ENCODE measurements at regions of chr1 and their contacts with region 1.

Region 1: GRCh38 chr1:235843461-235843961 is 23.2 kb downstream of the LYST start:
- DNase-seq: peak; percentile 76
- H3K4me3 Mint-ChIP-seq: no peak overlapping the region
- H3K27ac Mint-ChIP-seq: no peak overlapping the region
- H3K4me1 Mint-ChIP-seq: no peaks in the 10 kb centered on the region
- H3K27me3 Mint-ChIP-seq: no peaks in the 10 kb centered on the region
- CTCF ChIP-seq: peak; percentile 76

Region 2: GRCh38 chr1:235513495-235514366 is 329.8 kb before region 1 on chr1:
- CTCF ChIA-PET with region 1: interaction called, 20 read pairs
- POLR2A ChIA-PET with region 1: interaction called, 3 read pairs
- intact Hi-C with region 1: loop called (anchors 1 kb)
- DNase-seq: peak; percentile 94
- H3K4me3 Mint-ChIP-seq: no peak overlapping the region
- H3K27ac Mint-ChIP-seq: no peak overlapping the region
- H3K4me1 Mint-ChIP-seq: peaks cover 6% of the 10 kb centered on the region
- H3K27me3 Mint-ChIP-seq: no peaks in the 10 kb centered on the region
- CTCF ChIP-seq: peak; percentile 98

Region 3: DNA sequence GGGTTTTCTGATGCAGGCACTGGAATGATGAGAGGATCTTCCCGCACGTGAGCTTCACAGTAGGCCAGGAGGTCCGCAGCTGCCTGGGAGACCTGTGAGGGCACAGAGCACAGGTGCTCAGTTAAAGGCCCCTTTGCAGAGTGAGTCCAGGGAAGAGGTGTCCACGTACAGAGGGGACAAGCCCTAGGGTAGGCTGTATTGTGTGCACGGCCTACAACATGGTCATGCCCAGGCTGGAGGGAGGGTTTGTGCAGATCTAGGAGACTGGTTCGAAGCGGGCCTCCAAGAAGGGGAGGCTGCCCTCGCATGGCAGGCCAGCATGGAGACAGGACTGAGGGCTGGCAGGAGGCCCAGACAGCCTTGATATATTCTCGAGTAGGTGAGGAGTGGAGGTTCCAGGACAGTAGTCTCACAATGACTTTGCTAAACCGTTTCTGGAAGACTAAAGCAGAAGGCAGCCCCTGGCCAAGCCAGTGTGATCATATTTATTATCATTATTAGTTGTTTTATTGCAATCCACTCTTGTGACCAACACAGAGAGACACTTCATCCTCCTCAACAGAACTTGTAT is 291.3 kb before region 1 on chr1:
- CTCF ChIA-PET with region 1: no interaction called
- POLR2A ChIA-PET with region 1: no interaction called
- intact Hi-C with region 1: no loop called
- DNase-seq: no peak
- H3K4me3 Mint-ChIP-seq: no peak overlapping the region
- H3K27ac Mint-ChIP-seq: no peak overlapping the region
- H3K4me1 Mint-ChIP-seq: no peaks in the 10 kb centered on the region
- H3K27me3 Mint-ChIP-seq: no peaks in the 10 kb centered on the region
- CTCF ChIP-seq: no peak

Region 4: GRCh38 chr1:235739124-235739523 is 104.4 kb before region 1 on chr1:
- CTCF ChIA-PET with region 1: no interaction called
- POLR2A ChIA-PET with region 1: no interaction called
- intact Hi-C with region 1: no loop called
- DNase-seq: peak; percentile 73
- H3K4me3 Mint-ChIP-seq: no peak overlapping the region
- H3K27ac Mint-ChIP-seq: no peak overlapping the region
- H3K4me1 Mint-ChIP-seq: peaks cover 25% of the 10 kb centered on the region
- H3K27me3 Mint-ChIP-seq: no peaks in the 10 kb centered on the region
- CTCF ChIP-seq: no peak

Region 5: DNA sequence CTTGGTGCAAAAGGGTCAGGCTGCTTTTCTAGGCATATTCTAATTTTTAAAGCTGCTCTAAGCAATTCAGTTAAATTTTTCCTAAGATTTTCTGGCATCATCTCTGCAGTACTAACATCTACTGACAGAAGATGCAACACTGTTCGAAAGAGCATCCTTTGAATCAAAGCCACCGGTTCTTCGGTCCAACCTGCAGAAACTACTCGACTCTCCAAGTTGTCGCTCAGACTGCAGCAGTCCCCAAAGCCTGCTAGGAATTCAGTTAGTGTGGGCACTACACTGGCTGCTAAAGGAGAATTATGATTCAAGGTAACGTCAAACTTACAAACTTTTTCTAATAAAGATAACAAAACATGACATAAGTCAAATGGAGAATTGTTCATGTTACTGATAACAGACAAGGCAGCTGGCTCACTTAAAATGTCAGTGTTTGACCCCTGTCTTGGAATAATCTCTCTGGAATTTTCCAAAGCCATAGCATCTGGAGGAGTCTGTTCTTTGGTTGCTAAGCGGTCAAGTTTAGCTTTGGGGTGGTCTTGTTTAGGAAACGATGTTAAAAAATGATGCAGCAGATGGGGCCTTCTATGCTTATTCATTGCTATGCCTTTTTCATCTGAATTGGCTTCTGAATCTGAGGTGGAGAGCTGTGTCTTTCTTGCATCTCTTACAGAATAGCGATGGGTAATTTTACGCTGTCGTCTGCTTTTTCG is 33.7 kb before region 1 on chr1:
- CTCF ChIA-PET with region 1: interaction called, 13 read pairs
- POLR2A ChIA-PET with region 1: interaction called, 3 read pairs
- intact Hi-C with region 1: no loop called
- DNase-seq: no peak
- H3K4me3 Mint-ChIP-seq: no peak overlapping the region
- H3K27ac Mint-ChIP-seq: no peak overlapping the region
- H3K4me1 Mint-ChIP-seq: no peaks in the 10 kb centered on the region
- H3K27me3 Mint-ChIP-seq: no peaks in the 10 kb centered on the region
- CTCF ChIP-seq: no peak

Region 6: GRCh38 chr1:235831148-235831547 is 12.4 kb before region 1 on chr1:
- CTCF ChIA-PET with region 1: interaction called, 69 read pairs
- POLR2A ChIA-PET with region 1: interaction called, 5 read pairs
- intact Hi-C with region 1: no loop called
- DNase-seq: peak; percentile 40
- H3K4me3 Mint-ChIP-seq: no peak overlapping the region
- H3K27ac Mint-ChIP-seq: no peak overlapping the region
- H3K4me1 Mint-ChIP-seq: peaks cover 6% of the 10 kb centered on the region
- H3K27me3 Mint-ChIP-seq: no peaks in the 10 kb centered on the region
- CTCF ChIP-seq: no peak

Region 7: DNA sequence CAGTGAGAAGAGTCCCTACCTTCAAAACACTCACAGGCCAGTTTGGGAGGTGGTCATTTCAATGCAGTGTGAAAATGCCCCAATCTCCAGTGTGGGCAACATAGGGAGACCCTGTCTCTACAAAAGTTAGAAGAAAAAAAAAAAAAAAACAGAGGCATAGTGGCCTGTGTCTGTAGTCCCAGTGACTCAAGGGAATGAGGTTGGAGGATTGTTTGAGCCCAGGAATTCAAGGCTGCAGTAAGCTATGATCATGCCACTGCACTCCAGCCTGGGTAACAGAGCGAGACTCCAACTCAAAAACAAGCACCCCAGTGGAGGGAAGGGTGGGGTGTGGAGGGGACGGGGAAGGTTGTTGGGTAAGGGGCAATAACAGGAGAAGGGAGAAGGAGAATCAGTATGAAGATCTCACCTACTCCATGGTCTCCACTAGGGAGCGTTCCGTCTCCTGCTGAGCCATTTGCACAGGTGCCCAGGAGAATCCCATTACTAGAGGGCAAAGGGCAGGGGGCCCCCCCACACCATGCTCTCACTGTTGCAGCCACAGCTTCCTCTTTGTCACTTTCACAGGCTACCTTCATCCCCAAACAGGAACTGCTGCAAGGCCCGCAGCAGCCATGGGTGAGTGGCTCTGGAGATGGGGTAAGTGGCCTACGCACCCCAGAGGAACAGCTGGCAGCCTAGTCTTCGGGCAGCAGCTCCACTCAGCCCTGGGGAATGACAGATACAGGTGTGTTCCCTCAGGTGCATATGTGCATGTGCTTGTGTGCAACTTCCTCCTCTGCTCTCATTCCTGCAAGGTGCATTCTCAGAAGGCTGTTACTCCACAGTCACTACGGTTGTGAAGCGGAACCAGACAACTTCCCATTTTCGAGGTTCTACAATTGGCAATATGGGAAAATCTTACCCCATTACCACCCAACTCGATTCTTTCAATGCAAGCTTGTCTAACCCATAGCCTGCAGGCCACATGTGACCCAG is 111.1 kb after region 1 on chr1:
- CTCF ChIA-PET with region 1: interaction called, 13 read pairs
- POLR2A ChIA-PET with region 1: no interaction called
- intact Hi-C with region 1: no loop called
- DNase-seq: no peak
- H3K4me3 Mint-ChIP-seq: no peak overlapping the region
- H3K27ac Mint-ChIP-seq: peak overlapping the region; percentile 28
- H3K4me1 Mint-ChIP-seq: peaks cover 9% of the 10 kb centered on the region
- H3K27me3 Mint-ChIP-seq: no peaks in the 10 kb centered on the region
- CTCF ChIP-seq: no peak